ENCODE measurements at regions of chr15 and their contacts with region 1.

Region 1: DNA sequence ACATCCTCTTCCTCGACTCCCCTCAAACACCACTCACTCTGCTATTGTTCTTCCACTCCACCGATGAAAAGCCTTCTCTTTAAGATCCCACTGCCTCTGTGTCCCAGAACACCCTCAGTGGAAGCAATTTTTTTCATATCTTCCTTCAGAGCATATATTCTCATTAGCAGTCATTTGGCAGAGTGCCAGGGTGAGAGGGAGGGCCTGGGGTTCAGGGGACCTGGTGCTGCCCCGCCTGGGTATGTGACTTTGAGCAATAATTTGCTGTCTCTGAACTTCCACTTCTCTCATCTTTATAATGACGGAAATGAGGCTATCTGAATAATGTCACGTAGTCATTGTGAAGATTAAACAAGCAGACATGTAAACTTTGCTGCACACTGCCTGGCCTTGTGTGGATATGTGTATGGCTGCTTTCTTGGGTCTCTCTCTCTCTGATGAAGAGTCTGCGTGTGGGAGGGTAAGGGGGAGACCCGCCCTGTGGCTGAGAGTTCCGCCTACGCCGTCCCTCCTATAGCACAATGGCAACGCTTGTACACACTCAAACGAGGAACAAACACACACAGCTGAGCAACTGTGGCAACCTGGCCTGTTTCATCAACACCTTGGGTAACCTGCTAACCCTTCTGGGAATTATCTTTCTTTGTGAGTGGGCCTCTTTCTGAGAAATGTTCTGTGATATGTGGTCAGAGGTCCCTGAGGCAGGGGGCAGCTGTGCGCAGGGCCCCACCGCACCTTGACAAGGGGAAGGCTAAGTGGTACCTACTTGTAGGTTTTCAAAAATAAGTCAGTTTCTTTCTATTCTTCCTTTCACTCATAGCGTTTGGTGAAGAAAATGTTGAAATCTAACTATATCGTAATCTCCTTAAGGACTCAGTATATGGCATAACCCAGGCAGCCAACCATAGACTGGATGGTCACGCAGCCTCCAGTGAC is 369.8 kb downstream of the SV2B start:
- DNase-seq: peak; percentile 75
- ATAC-seq: peak; percentile 86
- H3K4me3 Mint-ChIP-seq: peak overlapping the region; percentile 72
- H3K27ac Mint-ChIP-seq: peak overlapping the region; percentile 99
- H3K4me1 Mint-ChIP-seq: peaks cover 55% of the 10 kb centered on the region
- H3K27me3 Mint-ChIP-seq: no peaks in the 10 kb centered on the region

Region 2: GRCh38 chr15:91302588-91303439 is 167.1 kb before region 1 on chr15:
- POLR2A ChIA-PET with region 1: interaction called, 15 read pairs
- DNase-seq: no peak
- ATAC-seq: peak; percentile 53
- H3K4me3 Mint-ChIP-seq: peak overlapping the region; percentile 35
- H3K27ac Mint-ChIP-seq: peak overlapping the region; percentile 82
- H3K4me1 Mint-ChIP-seq: peaks cover 50% of the 10 kb centered on the region
- H3K27me3 Mint-ChIP-seq: peaks cover 12% of the 10 kb centered on the region